ENCODE measurements at regions of chr14 and their contacts with region 1.

Region 1: DNA sequence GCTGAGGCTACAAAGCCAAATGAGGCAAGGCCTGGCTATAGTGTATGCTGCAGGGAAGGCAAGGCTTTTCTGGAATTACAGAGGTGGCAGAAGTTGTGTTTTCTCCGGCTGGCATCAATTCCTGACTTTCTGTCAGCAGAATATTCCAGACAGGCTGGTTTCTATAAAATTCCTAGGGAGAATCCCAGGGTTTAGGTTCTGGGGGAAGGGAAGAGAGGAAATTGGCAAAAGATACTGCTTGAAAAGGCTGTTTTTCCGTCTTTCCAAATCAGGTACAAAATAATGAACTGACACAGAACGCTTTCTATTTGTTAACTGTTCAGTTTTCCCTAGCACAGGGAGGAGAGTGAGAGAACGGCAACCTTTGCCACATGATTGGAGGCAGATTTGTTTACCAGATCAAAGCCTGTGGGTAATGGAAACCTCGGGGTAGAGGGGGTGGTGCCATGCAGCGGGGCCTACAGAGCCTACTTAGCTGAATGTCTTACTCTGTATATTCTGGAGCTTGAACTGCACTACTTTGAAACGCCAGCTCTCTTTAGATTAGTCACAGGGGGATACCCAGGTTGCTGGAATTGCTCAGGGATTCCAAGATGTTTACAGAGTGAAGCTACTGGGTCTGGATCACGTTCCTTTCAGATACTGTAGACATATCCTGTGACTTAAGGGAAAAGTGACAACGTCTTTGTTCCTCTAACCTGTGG is 65.8 kb upstream of the DACT1 start:
- DNase-seq: no peak
- H3K4me3 Mint-ChIP-seq: peak overlapping the region; percentile 67
- H3K27ac Mint-ChIP-seq: peak overlapping the region; percentile 88
- H3K4me1 Mint-ChIP-seq: peaks cover 21% of the 10 kb centered on the region
- H3K27me3 Mint-ChIP-seq: peaks cover 2% of the 10 kb centered on the region

Region 2: DNA sequence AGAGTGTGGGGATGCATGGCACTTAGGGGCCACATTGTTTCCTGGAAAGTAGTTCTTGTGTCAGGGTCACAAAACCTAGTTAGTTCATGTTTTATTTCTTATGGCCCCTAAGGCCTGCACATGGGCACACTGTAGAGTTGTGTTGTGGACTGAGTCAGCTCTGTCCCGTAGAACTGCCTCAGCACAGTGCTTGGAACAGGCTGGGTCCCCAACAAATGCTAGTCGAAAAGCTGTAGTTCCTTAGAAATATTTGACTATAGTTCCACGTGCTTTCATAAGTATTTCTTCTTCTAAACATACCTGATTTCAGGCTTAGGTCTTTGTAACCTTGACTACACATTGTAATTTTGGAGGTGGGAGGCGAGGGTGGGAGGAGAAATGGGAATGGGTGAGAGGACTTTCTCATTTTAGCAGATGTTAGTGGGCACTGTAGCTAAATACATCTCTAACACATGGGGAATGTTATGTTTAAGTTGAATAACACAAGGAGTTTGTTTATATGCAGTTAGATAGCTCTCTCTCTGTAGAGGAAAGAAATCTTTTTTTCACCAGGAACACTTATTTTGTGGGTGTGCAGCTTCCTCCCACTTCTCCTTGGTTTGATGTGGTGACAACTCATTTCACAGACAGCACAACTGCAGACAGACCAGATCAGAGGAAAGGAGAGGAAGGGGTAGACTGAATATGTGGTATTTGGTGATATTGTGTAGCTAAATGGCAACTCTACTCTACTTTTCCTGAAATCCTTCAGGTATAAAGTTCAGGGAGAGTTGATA is 26.3 kb after region 1 on chr14:
- intact Hi-C with region 1: loop called (anchors 1 kb)
- DNase-seq: peak; percentile 8
- H3K4me3 Mint-ChIP-seq: no peak overlapping the region
- H3K27ac Mint-ChIP-seq: no peak overlapping the region
- H3K4me1 Mint-ChIP-seq: peaks cover 36% of the 10 kb centered on the region
- H3K27me3 Mint-ChIP-seq: peaks cover 3% of the 10 kb centered on the region

Region 3: DNA sequence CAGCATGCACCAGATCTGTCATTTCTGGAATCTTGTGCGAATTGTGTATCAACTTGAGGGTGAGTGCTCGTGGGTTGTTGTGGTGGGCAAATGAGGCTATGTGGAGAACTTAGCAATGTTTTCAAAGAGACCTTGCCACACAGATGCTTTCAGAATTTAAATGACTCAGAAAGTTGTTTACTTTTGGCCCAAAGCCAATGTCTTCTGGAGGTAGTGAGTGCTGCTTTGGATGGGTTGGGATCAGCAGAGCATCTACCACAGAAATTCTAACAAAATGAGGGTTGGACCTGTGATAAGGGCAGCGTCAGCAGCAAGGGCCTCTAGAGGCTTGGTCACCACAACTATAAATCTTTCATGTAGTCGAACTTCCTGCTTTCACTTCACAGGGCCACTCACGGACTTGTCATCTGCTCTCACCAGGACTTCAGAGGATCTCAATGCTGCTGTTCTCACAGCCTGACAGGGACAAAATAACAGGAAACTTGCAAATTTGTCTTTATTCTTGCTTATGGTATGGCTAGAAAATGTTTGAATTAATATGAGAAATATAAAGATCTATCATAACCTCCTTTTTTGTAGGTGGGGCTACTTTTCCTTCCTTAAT is 177.2 kb after region 1 on chr14:
- intact Hi-C with region 1: loop called (anchors 2 kb)
- DNase-seq: peak; percentile 14
- H3K4me3 Mint-ChIP-seq: peak overlapping the region; percentile 3
- H3K27ac Mint-ChIP-seq: peak overlapping the region; percentile 5
- H3K4me1 Mint-ChIP-seq: peaks cover 15% of the 10 kb centered on the region
- H3K27me3 Mint-ChIP-seq: peaks cover 3% of the 10 kb centered on the region

Measured in activated T-helper 1 cell treated with anti-CD3 and anti-CD28 coated beads, Interleukin-12 subunit alpha, Interleukin-12 subunit beta, Interleukin-2, Interleukin-4 antibody, amounts not matched to agents 30 ng/mL and 10 ng/mL and 1 ng/mL, durations not matched to agents 14 hours and 24 hours and 36 hours (primary cell).